Endothelial cell of umbilical vein (primary cell): ENCODE measurements at regions of chr5 and their contacts with region 1.

Region 1: GRCh38 chr5:175694371-175695160 is 36.7 kb downstream of the HRH2 start:
- DNase-seq: no peak
- H3K4me3 ChIP-seq: no peak overlapping the region
- H3K27ac ChIP-seq: no peak overlapping the region
- H3K4me1 ChIP-seq: no peaks in the 10 kb centered on the region
- H3K27me3 ChIP-seq: no peaks in the 10 kb centered on the region
- CTCF ChIP-seq: no peak
- POLR2A ChIP-seq: no peak

Region 2: GRCh38 chr5:175674731-175675346 is 19.7 kb before region 1 on chr5:
- CTCF ChIA-PET with region 1: no interaction called
- POLR2A ChIA-PET with region 1: no interaction called
- dilution Hi-C with region 1: no loop called
- intact Hi-C with region 1: loop called (anchors 2 kb)
- DNase-seq: no peak
- H3K4me3 ChIP-seq: no peak overlapping the region
- H3K27ac ChIP-seq: no peak overlapping the region
- H3K4me1 ChIP-seq: no peaks in the 10 kb centered on the region
- H3K27me3 ChIP-seq: no peaks in the 10 kb centered on the region
- CTCF ChIP-seq: no peak
- POLR2A ChIP-seq: no peak